Calu3 (cell line): ENCODE measurements at regions of chr14 and their contacts with region 1.

Region 1: GRCh38 chr14:23327947-23328744 is 6.9 kb downstream of the PABPN1 start:
- DNase-seq: peak; percentile 65
- H3K4me3 Mint-ChIP-seq: no peak overlapping the region
- H3K27ac Mint-ChIP-seq: no peak overlapping the region
- H3K4me1 Mint-ChIP-seq: peaks cover 12% of the 10 kb centered on the region
- H3K27me3 Mint-ChIP-seq: no peaks in the 10 kb centered on the region
- CTCF ChIP-seq: peak; percentile 72

Region 2: DNA sequence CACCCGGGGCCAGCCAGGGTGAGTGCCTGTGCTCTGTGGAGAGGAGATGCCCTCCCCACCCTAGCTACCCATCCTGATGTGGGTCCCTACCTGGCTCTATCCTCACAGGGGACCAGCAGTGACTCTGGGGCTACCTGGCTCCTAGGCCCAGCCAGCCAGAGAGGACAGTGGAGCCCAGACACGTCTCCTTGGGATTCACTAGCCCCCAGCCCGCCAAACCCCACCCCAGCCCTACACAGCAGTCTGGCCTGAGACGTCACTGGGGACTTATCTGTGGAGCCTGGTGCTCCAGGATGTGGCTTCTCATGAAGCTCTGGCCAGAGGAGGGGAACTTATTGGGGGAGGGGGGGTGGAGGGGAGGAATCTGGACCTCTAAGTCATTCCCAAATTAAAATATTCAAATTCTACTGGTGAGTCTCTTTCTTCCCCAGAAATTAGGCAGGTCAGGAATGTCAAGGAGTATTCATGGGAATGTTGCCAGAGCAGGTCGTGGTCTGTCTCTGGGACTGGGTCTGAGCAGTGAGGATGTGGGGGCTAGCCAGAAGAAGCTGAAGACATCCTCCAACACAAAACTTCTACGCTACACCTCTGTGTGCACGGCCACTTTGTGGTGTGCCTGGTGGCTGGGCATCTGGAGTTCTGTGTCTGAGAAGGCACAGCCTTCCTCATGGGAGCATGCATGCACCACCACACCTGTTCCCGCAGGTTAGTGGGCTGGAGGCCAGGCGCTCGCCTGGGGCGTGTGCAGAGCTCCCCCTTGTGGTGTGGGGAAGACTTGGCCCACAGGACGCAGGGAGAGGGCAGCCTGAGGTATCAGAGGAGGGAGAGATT is 51.4 kb after region 1 on chr14:
- CTCF ChIA-PET with region 1: interaction called, 5 read pairs
- intact Hi-C with region 1: loop called (anchors 1 kb)
- DNase-seq: peak; percentile 78
- H3K4me3 Mint-ChIP-seq: no peak overlapping the region
- H3K27ac Mint-ChIP-seq: no peak overlapping the region
- H3K4me1 Mint-ChIP-seq: no peaks in the 10 kb centered on the region
- H3K27me3 Mint-ChIP-seq: peaks cover 98% of the 10 kb centered on the region
- CTCF ChIP-seq: peak; percentile 83

Region 3: GRCh38 chr14:23457587-23458445 is 129.7 kb after region 1 on chr14:
- CTCF ChIA-PET with region 1: no interaction called
- intact Hi-C with region 1: loop called (anchors 5 kb)
- DNase-seq: peak; percentile 46
- H3K4me3 Mint-ChIP-seq: no peak overlapping the region
- H3K27ac Mint-ChIP-seq: no peak overlapping the region
- H3K4me1 Mint-ChIP-seq: peaks cover 8% of the 10 kb centered on the region
- H3K27me3 Mint-ChIP-seq: no peaks in the 10 kb centered on the region
- CTCF ChIP-seq: no peak